ENCODE measurements at regions of chr6 and their contacts with region 1.

Region 1: DNA sequence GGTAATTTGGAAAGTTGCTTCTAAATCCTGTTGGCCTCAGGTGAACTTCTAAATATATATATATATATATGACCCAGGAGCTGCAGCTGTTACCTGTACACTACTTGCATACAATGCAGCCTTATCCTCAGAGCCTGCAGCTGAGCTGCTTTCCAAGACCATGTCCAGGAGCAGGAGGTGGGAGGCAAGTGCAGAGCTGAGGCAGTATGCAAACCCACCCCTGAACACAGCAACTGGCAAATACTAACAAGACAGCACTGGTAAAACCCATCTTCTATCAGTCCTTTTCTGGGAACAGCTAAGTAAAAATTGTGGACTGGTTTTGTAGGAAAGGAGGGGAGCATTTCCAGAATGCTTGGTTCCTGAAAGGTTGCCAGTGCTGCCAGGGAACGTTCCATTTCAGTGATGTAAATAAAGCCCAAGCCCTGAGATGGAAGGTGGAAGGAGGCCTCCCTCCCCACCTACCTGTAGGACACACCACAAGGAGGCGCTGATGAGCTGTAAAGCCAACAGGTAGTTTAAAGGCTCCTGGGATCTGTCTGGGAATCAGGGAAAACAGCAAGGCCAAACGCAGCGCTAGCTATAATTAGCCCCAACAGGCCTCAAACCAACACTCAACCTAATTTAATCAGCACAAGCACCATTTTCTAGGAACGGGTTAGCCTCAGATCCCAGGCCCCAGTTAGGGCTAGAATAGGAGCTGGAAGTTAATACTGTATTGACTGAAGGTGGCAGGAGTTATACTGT is 93.8 kb upstream of the MAP7 start:
- H3K4me3 ChIP-seq: no peak overlapping the region
- H3K27ac ChIP-seq: no peak overlapping the region
- H3K4me1 ChIP-seq: no peaks in the 10 kb centered on the region
- CTCF ChIP-seq: peak; percentile 71

Region 2: DNA sequence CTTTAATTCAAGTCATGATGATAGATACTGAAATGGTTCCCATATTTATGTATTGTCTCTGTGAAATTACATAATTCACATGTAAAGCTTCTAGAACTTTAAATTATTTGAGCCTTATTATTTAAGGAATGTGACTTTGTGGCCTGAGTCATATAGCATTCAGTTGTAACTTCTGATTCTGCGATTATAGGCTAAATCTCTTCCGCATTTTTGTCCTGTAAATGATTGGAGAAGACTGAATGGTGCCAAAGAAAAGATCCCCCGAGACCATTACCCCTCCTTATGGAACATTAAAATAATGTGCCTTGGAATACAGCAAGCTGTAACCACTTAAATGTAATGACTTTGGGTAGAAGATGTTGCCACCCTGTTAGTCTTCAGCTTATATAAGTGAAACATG is 30.5 kb before region 1 on chr6:
- CTCF ChIA-PET with region 1: interaction called, 19 read pairs
- POLR2A ChIA-PET with region 1: interaction called, 4 read pairs
- H3K4me3 ChIP-seq: no peak overlapping the region
- H3K27ac ChIP-seq: no peak overlapping the region
- H3K4me1 ChIP-seq: peaks cover 9% of the 10 kb centered on the region
- CTCF ChIP-seq: no peak

Region 3: DNA sequence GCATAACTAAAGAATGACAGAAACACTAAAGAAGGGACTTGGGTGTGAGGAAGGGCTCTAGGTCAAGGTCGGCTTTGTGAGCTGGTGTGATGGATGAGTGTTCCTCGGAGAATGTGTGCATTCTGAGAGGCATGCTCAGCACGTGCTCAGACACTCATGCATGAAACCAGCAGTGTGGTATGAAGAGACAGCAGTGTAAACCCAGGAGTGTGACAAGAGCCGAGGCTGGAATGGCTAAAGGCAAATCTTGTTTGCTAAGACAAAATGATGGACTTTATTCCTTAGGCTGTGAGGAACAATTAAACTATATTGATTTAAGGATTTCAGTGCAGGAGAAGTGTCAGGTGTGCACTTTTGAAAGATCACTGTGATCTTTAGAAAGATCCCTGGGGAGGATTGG is 13.6 kb after region 1 on chr6:
- CTCF ChIA-PET with region 1: interaction called, 15 read pairs
- POLR2A ChIA-PET with region 1: interaction called, 3 read pairs
- H3K4me3 ChIP-seq: no peak overlapping the region
- H3K27ac ChIP-seq: no peak overlapping the region
- H3K4me1 ChIP-seq: peaks cover 7% of the 10 kb centered on the region; the same call in 1 of the 2 replicates
- CTCF ChIP-seq: no peak

Region 4: DNA sequence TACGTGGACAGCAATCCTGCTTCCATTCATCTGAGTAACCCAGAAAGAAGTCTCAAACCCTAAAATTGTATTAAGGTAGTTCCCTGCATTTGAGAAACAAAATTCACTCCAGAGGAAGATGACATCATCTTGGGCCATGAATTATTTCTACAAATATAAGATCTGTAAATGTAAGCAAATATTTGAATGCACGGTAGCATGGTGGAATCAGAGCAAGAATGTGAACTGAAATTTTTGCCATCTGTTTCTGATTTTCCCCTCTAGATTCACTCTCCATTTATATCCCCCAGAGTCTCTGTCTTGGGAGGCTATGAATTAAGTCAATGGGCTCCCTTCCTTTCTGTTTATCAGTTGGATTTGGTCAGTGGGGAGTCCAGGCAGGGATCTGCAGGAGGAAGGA is 154.0 kb after region 1 on chr6:
- CTCF ChIA-PET with region 1: interaction called, 366 read pairs
- POLR2A ChIA-PET with region 1: interaction called, 85 read pairs
- H3K4me3 ChIP-seq: no peak overlapping the region
- H3K27ac ChIP-seq: no peak overlapping the region
- H3K4me1 ChIP-seq: no peaks in the 10 kb centered on the region
- CTCF ChIP-seq: no peak

Measured in HEK293 (cell line).